Panc1 (cell line): ENCODE measurements at regions of chr12 and their contacts with region 1.

Region 1: GRCh38 chr12:1576410-1577241 is 17.8 kb downstream of the FBXL14 start:
- DNase-seq: no peak
- ATAC-seq: peak; percentile 68
- H3K4me3 ChIP-seq: peak overlapping the region in 1 of 2 experiments; percentile 46; a peak in 3 of 4 replicates
- H3K27ac ChIP-seq: peak overlapping the region; percentile 77
- H3K4me1 ChIP-seq: peaks cover 42% of the 10 kb centered on the region
- H3K27me3 ChIP-seq: no peaks in the 10 kb centered on the region
- CTCF ChIP-seq: no peak

Region 2: DNA sequence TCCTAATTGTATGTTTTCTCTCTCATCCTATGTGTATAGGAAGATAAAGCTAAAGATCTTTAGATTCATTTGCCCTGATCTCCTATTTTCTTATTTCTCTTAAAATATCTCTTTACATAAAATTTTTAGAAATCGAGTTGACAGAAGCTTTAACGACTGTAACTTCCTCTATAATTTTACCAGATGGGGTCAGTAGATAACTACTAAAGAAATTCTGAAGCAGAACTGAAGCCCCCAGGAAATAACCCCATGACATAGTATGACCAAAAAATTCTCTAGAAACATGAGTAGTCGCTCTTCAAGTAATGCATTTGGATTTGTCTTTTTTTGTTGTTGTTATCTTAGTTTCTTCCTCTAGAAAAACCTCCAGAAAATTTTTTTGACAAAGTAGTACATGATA is 297.6 kb before region 1 on chr12:
- CTCF ChIA-PET with region 1: interaction called, 18 read pairs
- POLR2A ChIA-PET with region 1: no interaction called
- in situ Hi-C with region 1: no loop called
- intact Hi-C with region 1: no loop called
- DNase-seq: no peak
- ATAC-seq: no peak
- H3K4me3 ChIP-seq: no peak overlapping the region
- H3K27ac ChIP-seq: no peak overlapping the region
- H3K4me1 ChIP-seq: no peaks in the 10 kb centered on the region
- H3K27me3 ChIP-seq: no peaks in the 10 kb centered on the region
- CTCF ChIP-seq: no peak

Region 3: DNA sequence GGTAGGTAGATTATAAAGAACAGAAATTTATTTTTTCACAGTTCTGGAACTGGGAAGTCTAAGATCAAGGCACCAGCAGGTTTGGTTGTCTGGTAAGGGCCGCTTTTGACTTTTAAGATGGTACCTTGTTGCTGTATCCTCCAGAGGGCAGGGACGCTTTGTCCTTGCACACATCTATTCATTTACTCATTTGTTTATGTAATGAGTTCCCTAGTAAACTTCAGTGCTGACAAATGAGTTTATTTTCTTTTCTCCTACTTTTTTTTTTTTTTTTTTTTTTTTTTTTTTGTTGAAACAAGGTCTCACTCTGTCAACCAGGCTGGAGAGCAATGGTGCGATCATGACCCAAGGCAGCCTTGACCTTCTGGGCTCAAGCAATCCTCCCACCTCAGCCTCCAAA is 178.0 kb before region 1 on chr12:
- CTCF ChIA-PET with region 1: no interaction called
- POLR2A ChIA-PET with region 1: no interaction called
- in situ Hi-C with region 1: no loop called
- intact Hi-C with region 1: loop called (anchors 10 kb)
- DNase-seq: peak; percentile 4
- ATAC-seq: no peak
- H3K4me3 ChIP-seq: no peak overlapping the region
- H3K27ac ChIP-seq: no peak overlapping the region
- H3K4me1 ChIP-seq: no peaks in the 10 kb centered on the region
- H3K27me3 ChIP-seq: no peaks in the 10 kb centered on the region
- CTCF ChIP-seq: no peak